ENCODE measurements at regions of chrX and their contacts with region 1.

Region 1: GRCh38 chrX:129823115-129823514 is 20.6 kb downstream of the ZDHHC9 start:
- DNase-seq: no peak

Region 2: GRCh38 chrX:129606918-129607317 is 216.2 kb before region 1 on chrX:
- intact Hi-C with region 1: loop called in 1 of 2 experiments (anchors 10 kb)
- DNase-seq: no peak

Region 3: DNA sequence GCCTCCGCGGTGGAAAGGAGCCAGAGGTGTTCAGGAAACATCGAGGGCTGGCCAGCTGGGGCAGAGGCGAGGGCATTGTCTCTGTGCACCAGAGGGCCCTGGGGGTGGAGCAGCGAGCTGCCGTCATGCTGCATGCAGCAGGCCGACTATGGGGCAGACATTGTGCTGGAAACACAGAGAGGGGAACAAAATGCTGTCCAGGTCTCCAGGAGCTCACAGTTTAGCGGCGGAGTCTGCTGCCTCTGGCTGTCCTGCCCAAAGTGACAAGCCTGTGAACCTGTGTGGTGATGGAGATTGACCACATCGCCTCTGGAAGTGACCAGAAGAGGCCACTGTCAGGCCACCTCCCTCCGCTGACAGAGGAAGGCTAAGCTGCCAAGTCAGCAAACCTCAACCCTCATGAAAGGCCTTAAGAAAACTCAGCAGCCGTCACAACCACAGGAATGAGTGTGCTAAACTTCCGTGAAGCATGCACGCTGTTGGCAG is 63.5 kb before region 1 on chrX:
- intact Hi-C with region 1: loop called in 1 of 2 experiments (anchors 10 kb)
- DNase-seq: no peak

Region 4: GRCh38 chrX:129787336-129788055 is 35.6 kb before region 1 on chrX:
- intact Hi-C with region 1: loop called in 1 of 2 experiments (anchors 1 kb)
- DNase-seq: peak; percentile 50

Region 5: DNA sequence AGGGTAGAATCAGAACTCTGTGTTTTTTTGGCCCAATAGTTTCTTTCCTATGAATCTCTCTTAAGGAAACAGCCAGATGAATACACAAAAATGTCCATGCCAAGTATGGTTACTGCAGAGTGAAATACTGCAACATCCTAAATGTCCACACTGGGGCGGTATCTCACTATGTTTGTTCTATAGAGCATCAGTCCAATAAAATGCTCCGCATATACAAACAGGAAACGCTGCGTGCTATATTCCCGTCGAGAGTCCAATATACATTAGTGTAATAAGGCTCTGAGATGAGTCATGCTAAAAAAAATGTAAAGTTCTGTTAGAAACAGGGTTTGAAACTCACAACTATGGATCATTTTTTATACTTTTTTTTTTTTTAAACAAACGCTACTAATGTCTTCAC is 1152.8 kb after region 1 on chrX:
- intact Hi-C with region 1: no loop called
- DNase-seq: no peak

Measured in posterior vena cava (tissue), 2 donors.